ENCODE measurements at regions of chr1 and their contacts with region 1.

Region 1: GRCh38 chr1:178273707-178274410 is 180.0 kb downstream of the RASAL2 start:
- DNase-seq: peak; percentile 52
- ATAC-seq: no peak
- H3K4me3 ChIP-seq: no peak overlapping the region
- H3K27ac ChIP-seq: no peak overlapping the region
- H3K4me1 ChIP-seq: peaks cover 9% of the 10 kb centered on the region
- H3K27me3 ChIP-seq: no peaks in the 10 kb centered on the region
- CTCF ChIP-seq: no peak
- POLR2A ChIP-seq: no peak
- RAD21 ChIP-seq: no peak

Region 2: DNA sequence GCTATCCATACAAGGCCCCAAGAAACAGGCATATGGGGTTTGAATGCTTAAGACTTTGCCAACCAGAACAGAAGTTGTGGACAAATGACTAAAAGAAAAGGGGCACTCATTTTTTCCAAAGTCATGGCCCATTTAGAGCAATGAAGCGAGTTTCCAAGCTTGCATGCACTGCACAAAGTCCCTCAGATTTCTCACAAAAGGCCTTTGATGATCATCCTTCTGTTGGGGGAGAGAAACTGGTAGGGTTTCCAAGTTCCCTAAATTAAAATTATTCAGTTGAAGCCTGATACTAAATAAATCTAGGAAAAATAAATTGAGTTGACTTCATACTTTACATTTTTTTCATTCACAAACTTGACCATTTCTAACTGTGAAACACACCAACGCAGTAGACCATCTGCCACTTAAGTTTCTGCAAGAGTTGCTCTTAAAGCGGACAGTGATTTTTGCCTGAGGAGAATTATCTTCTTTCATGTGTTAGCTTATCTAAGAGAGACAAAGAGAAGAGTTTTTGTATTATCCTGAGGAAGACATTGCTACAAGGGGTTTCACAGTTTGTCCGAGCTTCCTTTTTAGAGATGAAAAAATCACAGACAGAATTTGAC is 443.2 kb before region 1 on chr1:
- CTCF ChIA-PET with region 1: no interaction called
- POLR2A ChIA-PET with region 1: no interaction called
- dilution Hi-C with region 1: no loop called
- in situ Hi-C with region 1: no loop called
- intact Hi-C with region 1: no loop called
- DNase-seq: no peak
- ATAC-seq: no peak
- H3K4me3 ChIP-seq: no peak overlapping the region
- H3K27ac ChIP-seq: no peak overlapping the region
- H3K4me1 ChIP-seq: no peaks in the 10 kb centered on the region
- H3K27me3 ChIP-seq: peaks cover 2% of the 10 kb centered on the region
- CTCF ChIP-seq: no peak
- POLR2A ChIP-seq: no peak
- RAD21 ChIP-seq: no peak

Region 3: GRCh38 chr1:178011465-178011828 is 262.4 kb before region 1 on chr1:
- CTCF ChIA-PET with region 1: no interaction called
- POLR2A ChIA-PET with region 1: no interaction called
- dilution Hi-C with region 1: no loop called
- in situ Hi-C with region 1: no loop called
- intact Hi-C with region 1: no loop called
- DNase-seq: peak; percentile 84
- ATAC-seq: no peak; the same call in 1 of the 2 replicates
- H3K4me3 ChIP-seq: no peak overlapping the region
- H3K27ac ChIP-seq: no peak overlapping the region
- H3K4me1 ChIP-seq: peaks cover 2% of the 10 kb centered on the region; the same call in 1 of the 2 replicates
- H3K27me3 ChIP-seq: no peaks in the 10 kb centered on the region
- CTCF ChIP-seq: no peak
- POLR2A ChIP-seq: no peak
- RAD21 ChIP-seq: no peak

Region 4: DNA sequence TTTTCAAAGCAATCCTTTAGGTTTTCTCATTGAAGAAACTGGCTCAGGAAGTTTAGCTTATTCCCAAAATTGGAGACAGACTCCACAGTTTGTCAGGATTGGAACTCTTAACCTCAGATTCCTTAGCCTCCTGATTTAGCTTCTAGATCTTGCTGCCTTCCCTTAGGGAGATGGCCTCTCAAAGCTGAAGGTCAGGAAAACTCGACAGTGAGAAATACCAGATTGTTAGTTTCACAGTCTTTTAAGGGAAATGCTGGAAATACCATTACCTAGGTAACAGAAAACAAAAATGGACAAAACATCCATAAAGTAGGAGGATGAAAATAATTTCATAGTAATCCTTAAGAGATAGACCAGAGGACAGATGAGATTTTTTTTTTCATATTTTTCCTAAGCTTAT is 172.2 kb before region 1 on chr1:
- CTCF ChIA-PET with region 1: no interaction called
- POLR2A ChIA-PET with region 1: no interaction called
- dilution Hi-C with region 1: no loop called
- in situ Hi-C with region 1: loop called (anchors 10 kb)
- intact Hi-C with region 1: no loop called
- DNase-seq: peak; percentile 25
- ATAC-seq: no peak
- H3K4me3 ChIP-seq: no peak overlapping the region
- H3K27ac ChIP-seq: no peak overlapping the region
- H3K4me1 ChIP-seq: peaks cover 11% of the 10 kb centered on the region; the same call in 1 of the 2 replicates
- H3K27me3 ChIP-seq: no peaks in the 10 kb centered on the region
- CTCF ChIP-seq: no peak
- POLR2A ChIP-seq: no peak
- RAD21 ChIP-seq: no peak

Region 5: GRCh38 chr1:178134061-178134460 is 139.8 kb before region 1 on chr1:
- CTCF ChIA-PET with region 1: no interaction called
- POLR2A ChIA-PET with region 1: no interaction called
- dilution Hi-C with region 1: no loop called
- in situ Hi-C with region 1: no loop called
- intact Hi-C with region 1: loop called (anchors 1 kb)
- DNase-seq: peak; percentile 82
- ATAC-seq: peak; percentile 54
- H3K4me3 ChIP-seq: no peak overlapping the region
- H3K27ac ChIP-seq: no peak overlapping the region
- H3K4me1 ChIP-seq: peaks cover 2% of the 10 kb centered on the region; the same call in 1 of the 2 replicates
- H3K27me3 ChIP-seq: no peaks in the 10 kb centered on the region
- CTCF ChIP-seq: no peak
- POLR2A ChIP-seq: no peak
- RAD21 ChIP-seq: no peak

Region 6: DNA sequence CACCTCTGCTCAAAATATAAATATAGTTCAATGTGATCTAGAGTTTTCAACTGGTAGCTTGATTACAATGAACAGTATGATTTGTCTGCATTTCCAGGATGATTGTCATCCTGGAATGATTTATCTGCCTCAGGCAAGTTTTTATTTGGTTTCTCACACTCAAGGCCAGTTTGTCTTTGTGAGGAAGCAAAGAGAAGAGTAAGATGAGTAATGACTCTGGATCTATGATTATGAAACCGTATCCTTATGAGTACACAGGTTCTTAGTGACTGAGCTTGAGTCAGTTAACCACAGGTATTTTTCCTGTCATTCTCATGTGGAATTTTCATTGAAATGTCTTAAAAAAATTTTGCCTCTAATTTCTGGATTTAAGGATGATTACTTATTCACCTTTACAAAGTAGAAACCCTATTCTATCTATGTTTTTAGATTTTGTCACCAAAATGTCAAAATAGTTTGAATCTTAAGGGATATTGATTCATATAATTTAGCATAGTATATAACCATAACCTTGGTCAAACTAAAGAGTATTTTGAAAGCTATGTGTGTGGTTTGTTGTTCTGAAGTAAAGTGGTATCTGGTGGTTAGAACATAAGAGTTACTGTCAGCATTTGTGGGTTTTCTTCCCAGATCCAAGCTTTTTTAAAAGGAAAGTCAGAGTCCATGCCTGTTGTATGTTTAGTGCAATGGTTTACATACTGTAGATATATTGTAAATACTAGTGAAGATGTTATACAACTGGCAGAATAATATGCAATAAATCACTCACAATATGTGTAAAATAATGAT is 34.9 kb before region 1 on chr1:
- CTCF ChIA-PET with region 1: no interaction called
- POLR2A ChIA-PET with region 1: no interaction called
- dilution Hi-C with region 1: no loop called
- in situ Hi-C with region 1: no loop called
- intact Hi-C with region 1: loop called (anchors 5 kb)
- DNase-seq: peak; percentile 98
- ATAC-seq: peak; percentile 75
- H3K4me3 ChIP-seq: no peak overlapping the region
- H3K27ac ChIP-seq: peak overlapping the region; percentile 33; the same call in 1 of the 2 replicates
- H3K4me1 ChIP-seq: peaks cover 7% of the 10 kb centered on the region
- H3K27me3 ChIP-seq: no peaks in the 10 kb centered on the region
- CTCF ChIP-seq: no peak
- POLR2A ChIP-seq: no peak
- RAD21 ChIP-seq: peak; percentile 15; the same call in 1 of the 2 replicates